HAP-1 (cell line): ENCODE measurements at regions of chr13 and their contacts with region 1.

Region 1: GRCh38 chr13:31742097-31742734 is 2.9 kb downstream of the RXFP2 start:
- DNase-seq: peak; percentile 58 to 84
- H3K4me3 ChIP-seq: no peak overlapping the region
- H3K4me1 ChIP-seq: no peaks in the 10 kb centered on the region; the same call in 1 of the 2 replicates
- H3K27me3 ChIP-seq: no peaks in the 10 kb centered on the region

Region 2: GRCh38 chr13:30585748-30586262 is 1156.4 kb before region 1 on chr13:
- in situ Hi-C with region 1: no loop called
- DNase-seq: no peak
- H3K4me3 ChIP-seq: no peak overlapping the region
- H3K4me1 ChIP-seq: no peaks in the 10 kb centered on the region
- H3K27me3 ChIP-seq: no peaks in the 10 kb centered on the region

Region 3: DNA sequence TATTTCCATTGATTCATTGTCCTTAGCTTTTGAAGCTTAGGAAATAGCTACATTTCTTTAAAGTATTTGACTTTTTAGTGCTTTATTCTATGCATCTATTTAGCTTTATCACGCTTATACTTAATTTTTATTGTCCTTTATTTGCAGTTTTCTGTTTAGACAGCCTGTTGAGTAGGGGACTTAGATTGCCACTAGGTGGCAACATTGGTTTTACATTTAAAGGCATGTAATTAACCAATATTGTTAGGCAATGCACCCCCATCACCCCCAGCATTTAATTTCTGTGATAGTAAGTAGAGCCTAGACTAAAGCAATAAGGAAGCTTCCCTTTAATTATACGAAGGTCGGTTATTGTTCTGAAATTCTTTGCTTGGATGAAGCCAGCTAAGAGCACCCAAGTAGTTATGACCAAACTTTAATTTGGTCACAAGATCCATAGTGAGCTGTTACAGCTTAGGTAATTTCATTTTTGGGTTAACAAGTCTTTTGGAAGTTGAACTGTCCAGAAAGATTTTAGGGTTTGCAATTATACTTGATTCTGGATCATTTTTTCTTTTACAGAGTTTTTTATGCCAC is 505.9 kb before region 1 on chr13:
- in situ Hi-C with region 1: loop called (anchors 25 kb)
- DNase-seq: peak; percentile 30 to 48
- H3K4me3 ChIP-seq: no peak overlapping the region
- H3K4me1 ChIP-seq: no peaks in the 10 kb centered on the region
- H3K27me3 ChIP-seq: no peaks in the 10 kb centered on the region

Region 4: GRCh38 chr13:31437975-31438374 is 304.2 kb before region 1 on chr13:
- in situ Hi-C with region 1: loop called (anchors 5 kb)
- DNase-seq: peak; percentile 52 to 67
- H3K4me3 ChIP-seq: no peak overlapping the region
- H3K4me1 ChIP-seq: peaks cover 11% of the 10 kb centered on the region
- H3K27me3 ChIP-seq: no peaks in the 10 kb centered on the region

Region 5: DNA sequence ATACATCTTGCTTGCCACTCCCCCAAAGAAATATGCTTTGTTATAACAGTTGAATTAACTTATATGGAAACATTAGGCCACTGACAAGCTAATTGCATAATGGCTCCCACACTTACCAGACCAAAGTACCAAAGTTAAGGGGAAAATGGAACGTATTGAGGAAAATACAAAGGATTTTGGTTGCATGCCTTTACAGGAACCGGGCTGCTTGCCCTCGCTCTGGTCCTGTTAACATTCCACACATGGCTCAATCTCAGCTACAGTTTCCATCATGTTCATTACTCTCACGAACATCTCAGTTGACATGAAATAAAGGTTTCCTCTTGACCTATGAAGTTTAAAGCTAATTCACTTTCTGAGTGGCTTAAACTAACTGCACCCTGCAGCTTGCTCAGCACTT is 223.6 kb before region 1 on chr13:
- in situ Hi-C with region 1: no loop called
- DNase-seq: no peak
- H3K4me3 ChIP-seq: no peak overlapping the region
- H3K4me1 ChIP-seq: no peaks in the 10 kb centered on the region
- H3K27me3 ChIP-seq: peaks cover 2% of the 10 kb centered on the region; the same call in 1 of the 2 replicates

Region 6: DNA sequence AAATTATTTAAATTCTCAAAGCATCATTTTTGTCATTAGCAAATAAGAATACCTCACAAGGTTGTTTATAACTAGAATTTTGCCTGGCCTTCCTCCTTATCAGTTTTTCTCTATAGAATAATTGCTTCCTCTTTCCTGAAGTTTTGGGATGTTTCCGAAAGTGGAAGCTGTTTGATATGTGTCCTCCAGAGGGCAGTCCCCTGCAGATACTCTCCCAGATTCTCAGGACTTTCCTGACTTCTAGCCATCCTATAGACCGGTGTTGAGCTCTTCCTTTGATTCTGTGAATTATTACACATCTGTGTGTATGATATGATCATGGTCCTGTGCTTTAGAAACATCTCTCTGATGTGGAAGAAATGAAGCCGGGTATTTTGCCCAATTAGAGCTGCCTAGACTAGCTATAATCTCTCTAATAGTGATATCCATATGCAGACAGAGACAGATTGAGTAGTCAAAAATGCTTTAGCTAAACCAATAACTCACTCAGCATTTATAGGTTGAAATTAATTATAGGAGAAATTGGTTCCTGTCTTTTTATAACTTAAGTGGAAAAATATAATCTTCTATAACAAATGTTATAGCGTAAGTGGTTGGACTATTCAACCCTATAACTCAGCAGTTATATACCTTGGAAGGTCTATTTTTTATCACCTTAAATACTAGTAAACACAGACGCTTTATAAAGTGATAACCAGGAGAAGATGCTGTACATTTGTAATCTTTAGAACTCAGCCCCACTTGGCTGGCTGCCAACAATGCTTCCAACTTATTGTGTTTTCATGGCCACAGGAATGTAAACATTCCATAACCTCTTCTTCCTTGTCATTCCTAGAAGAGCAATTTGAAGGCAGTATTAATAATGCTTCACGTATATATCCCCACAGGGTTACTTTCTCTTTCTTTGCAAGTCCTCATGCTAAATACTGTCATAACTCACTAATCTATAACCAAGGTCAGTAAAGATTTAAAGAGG is 203.9 kb before region 1 on chr13:
- in situ Hi-C with region 1: loop called (anchors 25 kb)
- DNase-seq: peak; percentile 67 to 73
- H3K4me3 ChIP-seq: no peak overlapping the region
- H3K4me1 ChIP-seq: peaks cover 7% of the 10 kb centered on the region
- H3K27me3 ChIP-seq: no peaks in the 10 kb centered on the region

Region 7: DNA sequence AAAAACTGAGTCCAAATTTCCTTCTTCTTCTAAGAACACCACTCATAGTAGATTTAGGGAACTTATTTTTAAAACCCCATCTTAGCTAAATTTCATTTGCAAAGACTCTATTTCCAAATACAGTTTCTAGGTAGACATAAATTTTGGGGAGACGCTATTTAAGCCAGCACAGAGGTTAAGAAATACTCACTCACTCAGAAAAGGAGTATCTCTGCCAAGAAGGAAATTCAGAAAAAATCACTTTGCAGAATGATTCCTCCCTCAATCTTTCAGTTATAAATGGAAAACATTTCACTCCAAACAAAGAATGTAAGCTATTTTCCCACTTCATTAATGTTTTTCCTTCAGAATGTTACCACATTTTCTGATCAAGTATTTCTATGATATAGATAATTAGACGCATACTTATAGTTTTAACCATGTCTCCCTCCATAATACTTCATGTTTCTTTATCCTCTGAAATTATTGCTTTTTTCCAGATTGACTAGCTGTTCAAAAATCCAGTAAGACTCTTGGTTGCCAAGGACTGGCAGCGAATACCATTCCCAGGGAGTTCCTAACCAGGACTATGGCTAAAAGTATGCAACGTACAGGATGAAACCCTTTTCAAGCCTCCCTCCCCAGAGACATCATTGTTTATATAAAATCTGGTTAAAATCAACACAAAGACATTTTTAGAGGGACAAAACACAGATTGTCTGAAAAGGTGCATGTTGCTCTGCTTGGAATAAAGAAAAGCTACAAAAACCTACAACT is 55.4 kb before region 1 on chr13:
- in situ Hi-C with region 1: no loop called
- DNase-seq: no peak
- H3K4me3 ChIP-seq: no peak overlapping the region
- H3K4me1 ChIP-seq: no peaks in the 10 kb centered on the region
- H3K27me3 ChIP-seq: no peaks in the 10 kb centered on the region